ENCODE measurements at regions of chr12 and their contacts with region 1.

Region 1: GRCh38 chr12:52865090-52865944 is 16.5 kb upstream of the KRT78 start:
- DNase-seq: peak; percentile 79
- ATAC-seq: peak; percentile 90
- H3K4me3 ChIP-seq: no peak overlapping the region
- H3K27ac ChIP-seq: peak overlapping the region; percentile 15; the same call in 1 of the 2 replicates
- H3K4me1 ChIP-seq: peaks cover 5 to 18% of the 10 kb centered on the region in 2 experiments; a peak in 3 of 4 replicates
- H3K27me3 ChIP-seq: no peaks in the 10 kb centered on the region
- CTCF ChIP-seq: peak in 2 of 3 experiments; percentile 88 to 96; a peak in 4 of 6 replicates
- POLR2A ChIP-seq: no peak
- RAD21 ChIP-seq: no peak

Region 2: GRCh38 chr12:51759175-51759574 is 1106.1 kb before region 1 on chr12:
- CTCF ChIA-PET with region 1: no interaction called
- POLR2A ChIA-PET with region 1: no interaction called
- RAD21 ChIA-PET with region 1: no interaction called
- intact Hi-C with region 1: no loop called
- DNase-seq: no peak
- ATAC-seq: no peak
- H3K4me3 ChIP-seq: no peak overlapping the region
- H3K27ac ChIP-seq: no peak overlapping the region
- H3K4me1 ChIP-seq: no peaks in the 10 kb centered on the region
- H3K27me3 ChIP-seq: no peaks in the 10 kb centered on the region
- CTCF ChIP-seq: no peak
- POLR2A ChIP-seq: no peak
- RAD21 ChIP-seq: no peak

Region 3: GRCh38 chr12:52713960-52714886 is 151.1 kb before region 1 on chr12:
- CTCF ChIA-PET with region 1: interaction called, 7 read pairs
- POLR2A ChIA-PET with region 1: no interaction called
- RAD21 ChIA-PET with region 1: no interaction called
- intact Hi-C with region 1: loop called (anchors 10 kb)
- DNase-seq: no peak
- ATAC-seq: no peak
- H3K4me3 ChIP-seq: no peak overlapping the region
- H3K27ac ChIP-seq: no peak overlapping the region
- H3K4me1 ChIP-seq: no peaks in the 10 kb centered on the region
- H3K27me3 ChIP-seq: no peaks in the 10 kb centered on the region
- CTCF ChIP-seq: no peak
- POLR2A ChIP-seq: no peak
- RAD21 ChIP-seq: no peak